Posterior vena cava (tissue), 2 donors: ENCODE measurements at regions of chr1 and their contacts with region 1.

Region 1: DNA sequence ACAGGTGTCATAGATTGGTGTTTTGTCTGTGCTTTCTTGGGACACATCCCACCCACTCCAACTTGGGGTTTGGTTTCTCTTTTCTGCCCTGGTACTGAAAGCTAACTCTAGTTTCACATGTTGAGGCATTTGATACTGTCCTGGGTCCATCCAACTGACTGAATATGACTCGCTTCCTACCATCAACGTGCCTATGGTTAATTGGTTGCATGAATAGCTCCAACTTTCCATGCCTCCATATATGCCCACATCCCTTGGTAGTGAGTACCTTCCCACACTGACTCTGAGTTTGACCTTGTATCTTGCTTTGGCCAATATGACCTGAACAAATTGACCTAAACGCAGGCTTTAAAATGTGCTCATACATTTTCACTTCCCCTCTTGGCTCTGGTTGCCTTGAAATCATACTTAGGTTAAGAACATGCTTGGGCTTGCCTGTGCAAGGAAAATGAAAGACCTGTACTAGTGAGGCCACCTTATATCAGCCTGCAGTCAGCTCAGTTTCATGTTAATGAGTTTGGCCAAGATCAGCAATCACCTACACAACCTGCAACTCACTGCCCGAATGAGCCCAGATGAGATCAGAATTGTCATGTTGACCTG is 81.0 kb upstream of the KCNK2 start:
- DNase-seq: no peak

Region 2: DNA sequence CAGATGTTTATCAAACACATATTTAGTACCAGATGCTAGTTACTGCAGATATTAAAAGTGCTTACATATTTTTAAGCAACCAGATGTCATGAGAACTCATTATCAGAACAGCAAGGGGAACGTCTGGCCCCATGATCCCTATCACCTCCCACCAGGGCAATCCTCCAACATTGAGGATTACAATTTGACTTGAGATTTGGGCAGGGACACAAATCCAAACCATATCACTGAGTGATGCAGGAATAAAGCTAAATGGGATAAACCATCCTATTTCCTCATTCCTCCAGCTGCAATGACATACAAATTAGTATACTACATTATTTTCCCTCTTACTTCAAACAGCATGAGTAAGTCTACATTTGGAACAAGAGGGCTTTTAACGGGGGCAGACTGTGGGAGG is 77.9 kb after region 1 on chr1:
- intact Hi-C with region 1: loop called in 1 of 2 experiments (anchors 2 kb)
- DNase-seq: no peak